Caco-2 (cell line): ENCODE measurements at regions of chr13 and their contacts with region 1.

Region 1: DNA sequence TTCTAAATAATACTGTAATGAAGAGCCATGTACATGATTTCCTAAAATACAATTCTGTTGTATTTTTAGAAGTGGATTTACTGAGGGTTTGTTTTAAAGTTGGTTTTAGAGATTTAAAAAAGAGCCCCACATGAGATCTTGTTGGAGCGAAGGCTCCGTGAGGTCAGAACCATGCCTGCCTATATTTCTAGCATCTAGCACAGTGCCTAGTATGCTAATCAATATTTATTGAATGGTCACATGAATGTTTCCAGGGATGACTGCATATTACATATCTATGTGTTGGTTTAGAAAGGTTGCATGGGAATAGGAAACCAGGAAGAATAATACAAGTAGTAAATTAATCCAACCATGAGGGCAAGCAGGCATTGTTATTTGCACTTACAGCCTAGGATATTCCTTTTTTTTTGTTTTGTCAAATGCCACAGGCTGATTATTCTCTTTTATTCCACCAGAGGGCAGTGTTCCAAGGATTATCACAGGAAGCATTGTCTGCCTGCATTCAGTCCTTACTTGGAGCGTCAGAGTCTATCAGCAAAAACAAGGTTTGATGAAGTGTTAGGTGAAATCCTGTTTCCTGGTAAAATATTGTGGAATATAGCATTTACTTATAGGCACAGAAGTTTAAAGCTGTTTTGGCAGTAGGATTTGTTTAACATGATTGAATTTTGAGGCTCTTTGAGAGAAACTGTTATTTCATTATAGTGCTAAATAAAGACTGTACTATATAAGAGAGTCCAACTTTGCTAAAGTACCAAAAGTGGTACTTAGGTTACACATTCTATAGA is 46.8 kb downstream of the COG3 start:
- DNase-seq: peak in 1 of 2 experiments; percentile 74
- H3K4me3 ChIP-seq: no peak overlapping the region
- H3K4me3 Mint-ChIP-seq: no peak overlapping the region
- H3K27ac Mint-ChIP-seq: peak overlapping the region; percentile 25
- H3K4me1 ChIP-seq: peaks cover 18% of the 10 kb centered on the region
- H3K4me1 Mint-ChIP-seq: peaks cover 6% of the 10 kb centered on the region
- H3K27me3 ChIP-seq: no peaks in the 10 kb centered on the region
- H3K27me3 Mint-ChIP-seq: no peaks in the 10 kb centered on the region
- CTCF ChIP-seq: peak; percentile 74 to 79

Region 2: GRCh38 chr13:45544520-45544919 is 33.0 kb after region 1 on chr13:
- CTCF ChIA-PET with region 1: interaction called, 3 read pairs
- POLR2A ChIA-PET with region 1: no interaction called
- intact Hi-C with region 1: loop called (anchors 1 kb)
- DNase-seq: no peak
- H3K4me3 ChIP-seq: no peak overlapping the region
- H3K4me3 Mint-ChIP-seq: no peak overlapping the region
- H3K27ac Mint-ChIP-seq: no peak overlapping the region
- H3K4me1 ChIP-seq: peaks cover 10% of the 10 kb centered on the region
- H3K4me1 Mint-ChIP-seq: no peaks in the 10 kb centered on the region
- H3K27me3 ChIP-seq: no peaks in the 10 kb centered on the region
- H3K27me3 Mint-ChIP-seq: no peaks in the 10 kb centered on the region
- CTCF ChIP-seq: peak in 1 of 2 experiments; percentile 29

Region 3: GRCh38 chr13:45584816-45585215 is 73.3 kb after region 1 on chr13:
- CTCF ChIA-PET with region 1: no interaction called
- POLR2A ChIA-PET with region 1: no interaction called
- intact Hi-C with region 1: loop called (anchors 5 kb)
- DNase-seq: peak; percentile 43 to 50
- H3K4me3 ChIP-seq: no peak overlapping the region
- H3K4me3 Mint-ChIP-seq: no peak overlapping the region
- H3K27ac Mint-ChIP-seq: peak overlapping the region; percentile 54
- H3K4me1 ChIP-seq: 0 out of 2 replicates have a peak, but pooled peaks cover 8% of the 10 kb centered on the region
- H3K4me1 Mint-ChIP-seq: peaks cover 6% of the 10 kb centered on the region
- H3K27me3 ChIP-seq: no peaks in the 10 kb centered on the region
- H3K27me3 Mint-ChIP-seq: no peaks in the 10 kb centered on the region
- CTCF ChIP-seq: peak; percentile 32 to 35

Region 4: GRCh38 chr13:45595965-45596364 is 84.5 kb after region 1 on chr13:
- CTCF ChIA-PET with region 1: no interaction called
- POLR2A ChIA-PET with region 1: no interaction called
- intact Hi-C with region 1: no loop called
- DNase-seq: no peak
- H3K4me3 ChIP-seq: no peak overlapping the region
- H3K4me3 Mint-ChIP-seq: no peak overlapping the region
- H3K27ac Mint-ChIP-seq: no peak overlapping the region
- H3K4me1 ChIP-seq: no peaks in the 10 kb centered on the region
- H3K4me1 Mint-ChIP-seq: no peaks in the 10 kb centered on the region
- H3K27me3 ChIP-seq: no peaks in the 10 kb centered on the region
- H3K27me3 Mint-ChIP-seq: peaks cover 13% of the 10 kb centered on the region
- CTCF ChIP-seq: no peak

Region 5: GRCh38 chr13:45718063-45718462 is 206.6 kb after region 1 on chr13:
- CTCF ChIA-PET with region 1: no interaction called
- POLR2A ChIA-PET with region 1: no interaction called
- intact Hi-C with region 1: loop called (anchors 1 kb)
- DNase-seq: peak in 1 of 2 experiments; percentile 16
- H3K4me3 ChIP-seq: no peak overlapping the region
- H3K4me3 Mint-ChIP-seq: no peak overlapping the region
- H3K27ac Mint-ChIP-seq: no peak overlapping the region
- H3K4me1 ChIP-seq: 0 out of 2 replicates have a peak, but pooled peaks cover 5% of the 10 kb centered on the region
- H3K4me1 Mint-ChIP-seq: no peaks in the 10 kb centered on the region
- H3K27me3 ChIP-seq: no peaks in the 10 kb centered on the region
- H3K27me3 Mint-ChIP-seq: no peaks in the 10 kb centered on the region
- CTCF ChIP-seq: peak; percentile 49 to 59

Region 6: DNA sequence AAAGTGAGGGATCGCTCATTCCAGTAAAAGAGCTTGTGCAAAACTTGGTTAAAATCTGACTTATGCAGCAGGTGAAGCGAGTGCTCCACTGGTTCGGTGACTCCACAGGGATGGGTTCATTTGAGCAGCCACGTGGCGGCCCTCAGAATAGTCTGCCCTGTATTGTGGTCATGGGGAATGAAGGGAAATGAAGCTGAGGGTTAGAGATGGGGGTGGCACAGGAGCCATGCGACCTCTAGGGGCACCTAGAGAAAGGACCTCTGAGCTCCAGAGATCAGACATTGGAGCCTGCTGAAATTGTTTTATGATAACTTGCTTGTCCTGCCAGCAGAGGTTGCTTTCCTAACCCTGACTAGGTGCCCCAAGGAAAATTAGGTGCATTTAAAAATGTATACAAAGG is 217.3 kb after region 1 on chr13:
- CTCF ChIA-PET with region 1: interaction called, 7 read pairs
- POLR2A ChIA-PET with region 1: no interaction called
- intact Hi-C with region 1: loop called (anchors 1 kb)
- DNase-seq: peak; percentile 64 to 68
- H3K4me3 ChIP-seq: no peak overlapping the region
- H3K4me3 Mint-ChIP-seq: no peak overlapping the region
- H3K27ac Mint-ChIP-seq: no peak overlapping the region
- H3K4me1 ChIP-seq: no peaks in the 10 kb centered on the region
- H3K4me1 Mint-ChIP-seq: no peaks in the 10 kb centered on the region
- H3K27me3 ChIP-seq: no peaks in the 10 kb centered on the region
- H3K27me3 Mint-ChIP-seq: no peaks in the 10 kb centered on the region
- CTCF ChIP-seq: peak; percentile 74 to 78

Region 7: GRCh38 chr13:46010148-46010547 is 498.6 kb after region 1 on chr13:
- CTCF ChIA-PET with region 1: no interaction called
- POLR2A ChIA-PET with region 1: no interaction called
- intact Hi-C with region 1: no loop called
- DNase-seq: peak in 1 of 2 experiments; percentile 18
- H3K4me3 ChIP-seq: no peak overlapping the region
- H3K4me3 Mint-ChIP-seq: no peak overlapping the region
- H3K27ac Mint-ChIP-seq: no peak overlapping the region
- H3K4me1 ChIP-seq: no peaks in the 10 kb centered on the region
- H3K4me1 Mint-ChIP-seq: no peaks in the 10 kb centered on the region
- H3K27me3 ChIP-seq: no peaks in the 10 kb centered on the region
- H3K27me3 Mint-ChIP-seq: no peaks in the 10 kb centered on the region
- CTCF ChIP-seq: peak; percentile 34 to 50

Region 8: DNA sequence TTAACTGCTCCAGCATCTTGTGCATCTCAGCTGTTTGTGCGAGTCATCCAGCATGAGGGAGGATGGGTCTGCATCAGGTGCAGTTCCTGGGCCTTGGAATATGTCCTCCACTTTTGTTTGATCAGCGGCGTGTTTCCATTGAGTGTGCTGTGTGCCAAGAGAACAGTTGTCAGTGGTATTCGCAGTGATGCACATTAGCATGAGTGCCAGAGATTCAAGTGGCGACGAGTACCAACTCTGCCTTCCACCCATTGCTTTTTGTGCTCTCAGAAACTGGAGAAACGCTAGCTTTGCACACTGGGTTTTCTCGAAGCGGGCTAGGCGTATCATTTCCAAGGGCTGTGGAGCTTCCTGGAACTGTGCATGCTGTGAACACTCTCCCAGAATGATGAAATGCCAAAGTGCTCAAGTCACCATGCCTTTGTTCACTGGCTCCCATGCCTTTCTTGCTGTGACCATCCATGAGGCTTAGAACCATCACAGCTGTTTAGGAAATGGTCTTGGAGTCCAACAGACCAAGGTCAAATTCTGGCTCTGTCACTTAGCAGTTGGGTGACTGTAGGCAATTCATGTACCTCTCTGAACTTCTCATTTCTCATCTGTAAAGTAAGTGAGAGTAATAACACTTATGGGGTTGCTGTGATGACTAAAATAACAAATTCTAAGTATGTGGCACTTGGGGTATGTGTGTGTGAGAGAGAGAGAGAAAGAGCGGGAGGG is 1059.8 kb after region 1 on chr13:
- CTCF ChIA-PET with region 1: no interaction called
- POLR2A ChIA-PET with region 1: no interaction called
- intact Hi-C with region 1: no loop called
- DNase-seq: no peak
- H3K4me3 ChIP-seq: no peak overlapping the region
- H3K4me3 Mint-ChIP-seq: no peak overlapping the region
- H3K27ac Mint-ChIP-seq: peak overlapping the region; percentile 17
- H3K4me1 ChIP-seq: peaks cover 42% of the 10 kb centered on the region
- H3K4me1 Mint-ChIP-seq: peaks cover 60% of the 10 kb centered on the region
- H3K27me3 ChIP-seq: no peaks in the 10 kb centered on the region
- H3K27me3 Mint-ChIP-seq: no peaks in the 10 kb centered on the region
- CTCF ChIP-seq: no peak